Activated CD4-positive, alpha-beta memory T cell treated with anti-CD3 and anti-CD28 coated beads, Interleukin-2, amount 10 ng/mL, durations not matched to agents 7 days and 5 days (primary cell): ENCODE measurements at regions of chr1 and their contacts with region 1.

Region 1: DNA sequence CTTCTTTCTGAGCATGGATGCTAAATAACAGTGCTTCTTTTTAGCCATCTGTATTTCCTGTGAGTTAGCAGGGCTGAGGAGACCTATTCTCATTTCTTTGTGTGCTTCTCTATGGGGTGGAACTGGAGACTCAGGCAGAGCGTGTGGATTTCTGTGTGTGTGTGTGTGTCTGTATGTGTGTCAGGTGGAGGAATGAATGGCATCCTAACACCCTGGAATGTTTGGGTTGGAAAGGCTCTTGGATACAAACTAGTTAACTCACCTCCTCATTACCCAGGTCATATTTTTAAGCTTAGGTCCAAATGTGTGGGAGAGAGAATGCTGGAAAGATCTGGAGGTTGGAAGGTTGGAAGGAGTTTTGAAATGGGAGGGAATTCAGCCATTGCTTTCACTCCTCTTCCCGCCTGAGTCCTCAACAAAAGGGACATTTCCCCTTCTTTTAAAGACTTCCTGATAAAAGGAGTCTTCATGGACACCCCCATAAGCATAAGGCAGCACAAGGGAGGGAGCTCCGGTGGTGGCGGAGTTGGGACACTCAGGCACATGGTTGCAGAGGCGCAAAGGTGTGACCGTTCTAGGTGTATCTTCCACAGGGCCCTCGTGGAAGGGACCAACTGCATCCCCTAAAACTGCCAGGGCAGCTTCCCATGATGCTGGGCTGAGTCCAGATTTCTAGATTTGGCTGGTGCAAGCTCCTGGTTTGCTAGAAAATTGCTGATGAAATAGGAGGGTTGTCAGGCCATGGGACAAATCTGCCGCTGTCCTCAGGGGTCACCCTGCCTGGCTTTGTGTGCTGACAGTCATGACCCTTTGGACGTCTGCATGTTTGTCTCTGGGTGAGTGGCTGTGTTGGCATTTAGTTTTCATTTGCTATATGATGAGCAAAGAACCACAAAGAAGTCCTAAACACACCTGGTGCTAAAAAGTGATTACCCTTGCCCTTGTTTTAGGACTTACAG is 37.6 kb downstream of the MTARC1 start:
- DNase-seq: no peak
- H3K4me3 Mint-ChIP-seq: no peak overlapping the region
- H3K27ac Mint-ChIP-seq: no peak overlapping the region
- H3K4me1 Mint-ChIP-seq: no peaks in the 10 kb centered on the region
- H3K27me3 Mint-ChIP-seq: peaks cover 13% of the 10 kb centered on the region

Region 2: GRCh38 chr1:220565670-220566069 is 258.6 kb before region 1 on chr1:
- CTCF ChIA-PET with region 1: no interaction called
- POLR2A ChIA-PET with region 1: no interaction called
- DNase-seq: no peak
- H3K4me3 Mint-ChIP-seq: no peak overlapping the region
- H3K27ac Mint-ChIP-seq: no peak overlapping the region
- H3K4me1 Mint-ChIP-seq: no peaks in the 10 kb centered on the region
- H3K27me3 Mint-ChIP-seq: peaks cover 10% of the 10 kb centered on the region

Region 3: GRCh38 chr1:220810179-220810653 is 14.1 kb before region 1 on chr1:
- CTCF ChIA-PET with region 1: interaction called, 10 read pairs
- POLR2A ChIA-PET with region 1: no interaction called
- DNase-seq: peak; percentile 71
- H3K4me3 Mint-ChIP-seq: no peak overlapping the region
- H3K27ac Mint-ChIP-seq: no peak overlapping the region
- H3K4me1 Mint-ChIP-seq: peaks cover 6% of the 10 kb centered on the region
- H3K27me3 Mint-ChIP-seq: peaks cover 9% of the 10 kb centered on the region